Activated naive CD8-positive, alpha-beta T cell treated with anti-CD3 and anti-CD28 coated beads, Interleukin-2, amount 10 ng/mL, durations not matched to agents 7 days and 5 days (primary cell): ENCODE measurements at regions of chr13 and their contacts with region 1.

Region 1: GRCh38 chr13:91313103-91313502 is 34.4 kb upstream of the MIR17HG start:
- DNase-seq: no peak
- ATAC-seq: peak; percentile 63
- H3K4me3 Mint-ChIP-seq: peak overlapping the region; percentile 38
- H3K27ac Mint-ChIP-seq: no peak overlapping the region
- H3K4me1 Mint-ChIP-seq: peaks cover 15% of the 10 kb centered on the region
- H3K27me3 Mint-ChIP-seq: peaks cover 36% of the 10 kb centered on the region

Region 2: DNA sequence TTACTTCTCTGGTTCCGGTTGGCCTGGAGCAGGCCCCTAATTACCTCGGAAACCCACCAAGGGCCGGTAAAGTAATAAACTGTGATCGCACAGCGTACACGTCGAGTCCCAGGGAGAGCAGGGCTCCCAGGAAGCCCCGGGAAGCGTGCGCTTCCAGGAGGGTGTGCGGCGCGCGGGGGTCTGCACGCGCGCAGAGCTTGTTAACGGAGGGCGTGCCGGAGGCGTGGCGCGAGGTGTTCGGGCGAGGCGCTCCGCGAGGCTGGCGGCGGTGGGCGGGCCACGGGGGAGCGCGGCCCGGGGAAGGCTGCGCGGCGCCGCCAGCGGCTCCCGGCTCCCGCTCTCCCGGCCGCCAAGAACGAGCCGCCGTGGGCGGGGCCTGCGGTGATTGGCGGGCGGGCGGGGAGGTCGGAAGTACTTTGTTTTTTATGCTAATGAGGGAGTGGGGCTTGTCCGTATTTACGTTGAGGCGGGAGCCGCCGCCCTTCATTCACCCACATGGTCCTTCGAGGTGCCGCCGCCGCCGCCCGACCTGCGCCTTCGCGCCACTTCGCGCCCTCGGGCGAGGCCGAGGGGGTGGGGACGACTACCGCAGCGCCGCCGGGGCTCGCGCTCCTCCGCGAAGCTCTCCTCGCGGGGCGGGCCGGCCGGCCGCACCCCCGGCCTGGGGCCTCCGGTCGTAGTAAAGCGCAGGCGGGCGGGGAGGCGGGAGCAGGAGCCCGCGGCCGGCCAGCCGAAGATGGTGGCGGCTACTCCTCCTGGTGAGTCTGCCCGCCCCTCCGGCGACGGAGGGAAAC is 34.3 kb after region 1 on chr13 and contains the start of gene MIR17HG:
- POLR2A ChIA-PET with region 1: interaction called, 15 read pairs
- DNase-seq: peak; percentile 90
- ATAC-seq: peak; percentile 68
- H3K4me3 Mint-ChIP-seq: peak within 1 kb of the TSS; percentile 95
- H3K27ac Mint-ChIP-seq: peak within 1 kb of the TSS; percentile 96
- H3K4me1 Mint-ChIP-seq: peaks cover 33% of the 10 kb centered on the region
- H3K27me3 Mint-ChIP-seq: peaks cover 5% of the 10 kb centered on the region
- total RNA-seq, gene MIR17HG: 10.1 to 11.9 TPM